Ovary (tissue), 10 donors: ENCODE measurements at regions of chr4 and their contacts with region 1.

Region 1: GRCh38 chr4:5895287-5895686 is 2.4 kb upstream of the CRMP1 start:
- DNase-seq: no peak
- H3K4me3 ChIP-seq: no peak overlapping the region
- H3K27ac ChIP-seq: no peak overlapping the region
- H3K4me1 ChIP-seq: no peaks in the 10 kb centered on the region
- H3K27me3 ChIP-seq: peaks cover 5% of the 10 kb centered on the region
- CTCF ChIP-seq: no peak
- EP300 ChIP-seq: no peak
- POLR2A ChIP-seq: no peak

Region 2: DNA sequence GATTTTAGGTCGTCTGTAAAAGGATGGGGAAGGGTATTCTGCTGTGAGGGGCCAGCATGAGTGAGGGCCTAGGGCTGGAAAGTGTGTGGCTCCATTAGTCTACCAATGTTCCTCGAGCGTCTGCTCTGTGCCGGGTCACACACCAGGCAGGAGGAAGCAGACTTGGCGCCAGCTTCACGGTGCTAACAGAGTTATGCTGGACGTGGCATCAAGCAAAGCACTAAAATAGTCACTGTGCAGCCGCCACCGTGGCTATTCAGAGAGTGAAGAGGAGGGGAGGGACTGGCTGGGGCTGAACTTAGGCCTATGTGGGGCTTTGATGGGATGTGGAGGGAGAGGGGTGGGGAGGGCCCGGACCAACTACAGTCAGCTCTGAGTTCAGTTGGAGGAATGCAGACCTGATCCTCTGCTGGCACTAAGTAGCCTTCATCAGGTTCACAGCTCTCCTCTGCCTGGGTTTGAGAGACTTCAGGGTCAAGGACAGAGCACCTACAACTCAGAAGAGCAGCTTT is 1119.7 kb before region 1 on chr4:
- intact Hi-C with region 1: loop called in 1 of 4 experiments (anchors 5 kb)
- DNase-seq: no peak
- H3K4me3 ChIP-seq: no peak overlapping the region
- H3K27ac ChIP-seq: no peak overlapping the region
- H3K4me1 ChIP-seq: no peaks in the 10 kb centered on the region
- H3K27me3 ChIP-seq: no peaks in the 10 kb centered on the region
- CTCF ChIP-seq: no peak
- EP300 ChIP-seq: no peak
- POLR2A ChIP-seq: no peak